Dorsolateral prefrontal cortex (tissue), 120 donors: ENCODE measurements at regions of chr18 and their contacts with region 1.

Region 1: GRCh38 chr18:56382541-56382940 is 255.9 kb downstream of the TXNL1 start:
- DNase-seq: peak; percentile 5 to 73 (median 50)
- H3K4me3 ChIP-seq: peak overlapping the region in 22 of 59 donors; percentile 0 to 51 (median 21)
- H3K27ac ChIP-seq: peak overlapping the region in 30 of 59 donors; percentile 2 to 80 (median 36)
- H3K27me3 ChIP-seq: no peaks in the 10 kb centered on the region
- CTCF ChIP-seq: peak in 8 of 56 donors; percentile 13 to 34 (median 28)

Region 2: DNA sequence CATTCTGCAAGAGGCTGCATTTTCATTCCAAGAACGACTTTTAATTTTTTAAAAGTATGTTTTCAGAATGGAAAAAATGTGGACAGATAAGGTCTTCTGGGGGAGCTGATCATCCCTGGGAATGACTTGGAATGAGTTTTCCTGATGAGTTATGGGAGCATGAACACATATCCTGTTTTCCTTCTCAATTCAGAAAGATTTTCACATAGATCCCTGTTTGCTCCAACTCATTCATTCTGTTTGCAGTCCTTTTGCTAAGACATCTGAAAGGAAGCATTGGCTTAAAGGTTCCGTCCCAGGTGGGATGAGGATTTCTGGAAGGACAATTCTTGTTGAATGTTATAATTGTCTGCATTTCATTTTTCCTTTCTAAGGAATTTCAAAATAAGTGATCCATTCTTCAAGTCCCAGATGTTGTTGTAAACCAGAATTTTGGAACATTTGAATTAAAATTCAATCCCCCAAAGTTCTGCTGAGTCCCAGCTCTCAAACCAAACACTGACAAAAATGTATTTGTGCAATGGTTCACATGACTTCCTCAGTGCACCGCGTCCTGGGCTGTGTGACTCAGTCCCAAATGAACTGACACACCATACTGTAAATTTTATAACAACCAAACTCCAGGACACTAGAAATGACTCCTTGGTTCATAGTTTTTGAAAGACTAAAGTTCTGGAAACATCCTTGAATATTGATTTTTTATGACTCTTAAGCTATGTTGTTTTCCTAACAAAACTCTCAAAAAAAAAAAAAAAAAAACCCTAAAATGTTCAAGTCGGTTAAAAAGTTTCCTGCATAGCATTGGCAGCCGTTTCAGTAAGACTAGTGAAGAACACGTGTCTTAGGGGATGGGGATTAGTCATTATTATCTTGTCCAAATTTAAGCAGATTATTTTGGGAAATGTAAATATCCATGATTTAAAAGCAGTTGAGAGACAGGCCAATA is 512.7 kb before region 1 on chr18:
- intact Hi-C with region 1: loop called in 1 of 2 experiments (anchors 10 kb)
- DNase-seq: no peak
- H3K4me3 ChIP-seq: no peak overlapping the region
- H3K27ac ChIP-seq: no peak overlapping the region
- H3K27me3 ChIP-seq: no peaks in the 10 kb centered on the region
- CTCF ChIP-seq: no peak